ENCODE measurements at regions of chr6 and their contacts with region 1.

Region 1: GRCh38 chr6:30541515-30542403 is 14.5 kb downstream of the GNL1 start:
- DNase-seq: peak; percentile 74 to 85 (median 79)
- H3K4me3 ChIP-seq: peak overlapping the region; percentile 68
- H3K4me3 Mint-ChIP-seq: peak overlapping the region; percentile 83 to 90 (median 86)
- H3K27ac ChIP-seq: peak overlapping the region; percentile 55
- H3K27ac Mint-ChIP-seq: peak overlapping the region; percentile 84 to 97 (median 94)
- H3K4me1 ChIP-seq: peaks cover 33% of the 10 kb centered on the region
- H3K4me1 Mint-ChIP-seq: peaks cover 34 to 39% (median 37%) of the 10 kb centered on the region in 3 donors
- H3K27me3 ChIP-seq: no peaks in the 10 kb centered on the region
- H3K27me3 Mint-ChIP-seq: peaks cover 0 to under 1% of the 10 kb centered on the region in 2 donors

Region 2: DNA sequence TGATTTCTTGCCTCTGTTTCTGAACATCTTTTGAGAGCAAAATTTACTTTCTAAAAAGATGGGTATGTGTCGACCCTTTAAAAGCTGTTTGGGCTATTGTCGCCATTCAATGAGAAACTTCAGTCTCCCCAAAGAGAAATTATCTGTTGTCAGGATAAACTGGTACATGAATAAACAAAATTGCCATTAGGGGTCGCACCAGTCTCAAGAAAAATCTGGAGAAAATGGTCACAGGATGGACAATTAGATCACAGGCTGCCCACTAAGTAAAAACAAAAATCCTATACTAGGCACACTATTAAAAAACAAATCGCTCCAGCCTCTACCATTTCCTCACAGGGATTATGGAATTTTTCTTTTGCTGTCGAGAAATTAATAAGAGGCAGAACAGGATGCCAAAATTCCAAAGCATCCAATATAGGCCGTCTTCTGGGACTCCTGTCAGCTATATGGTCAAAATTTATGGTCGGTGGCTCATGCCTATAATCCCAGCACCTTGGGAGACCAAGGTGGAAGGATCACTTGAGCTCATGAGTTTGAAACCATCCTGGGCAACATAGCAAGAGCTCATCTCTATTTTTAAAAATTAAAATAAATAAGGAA is 58.0 kb before region 1 on chr6:
- CTCF ChIA-PET with region 1: interaction called, 228 read pairs
- POLR2A ChIA-PET with region 1: interaction called, 20 read pairs
- DNase-seq: peak in 2 of 5 donors; percentile 35 to 41
- H3K4me3 ChIP-seq: no peak overlapping the region
- H3K4me3 Mint-ChIP-seq: no peak overlapping the region
- H3K27ac ChIP-seq: no peak overlapping the region
- H3K27ac Mint-ChIP-seq: peak overlapping the region in 1 of 8 donors; percentile 53
- H3K4me1 ChIP-seq: peaks cover 29% of the 10 kb centered on the region
- H3K4me1 Mint-ChIP-seq: peaks cover 31 to 41% (median 34%) of the 10 kb centered on the region in 3 donors
- H3K27me3 ChIP-seq: peaks cover 21% of the 10 kb centered on the region
- H3K27me3 Mint-ChIP-seq: peaks cover 27 to 34% of the 10 kb centered on the region in 2 donors

Region 3: DNA sequence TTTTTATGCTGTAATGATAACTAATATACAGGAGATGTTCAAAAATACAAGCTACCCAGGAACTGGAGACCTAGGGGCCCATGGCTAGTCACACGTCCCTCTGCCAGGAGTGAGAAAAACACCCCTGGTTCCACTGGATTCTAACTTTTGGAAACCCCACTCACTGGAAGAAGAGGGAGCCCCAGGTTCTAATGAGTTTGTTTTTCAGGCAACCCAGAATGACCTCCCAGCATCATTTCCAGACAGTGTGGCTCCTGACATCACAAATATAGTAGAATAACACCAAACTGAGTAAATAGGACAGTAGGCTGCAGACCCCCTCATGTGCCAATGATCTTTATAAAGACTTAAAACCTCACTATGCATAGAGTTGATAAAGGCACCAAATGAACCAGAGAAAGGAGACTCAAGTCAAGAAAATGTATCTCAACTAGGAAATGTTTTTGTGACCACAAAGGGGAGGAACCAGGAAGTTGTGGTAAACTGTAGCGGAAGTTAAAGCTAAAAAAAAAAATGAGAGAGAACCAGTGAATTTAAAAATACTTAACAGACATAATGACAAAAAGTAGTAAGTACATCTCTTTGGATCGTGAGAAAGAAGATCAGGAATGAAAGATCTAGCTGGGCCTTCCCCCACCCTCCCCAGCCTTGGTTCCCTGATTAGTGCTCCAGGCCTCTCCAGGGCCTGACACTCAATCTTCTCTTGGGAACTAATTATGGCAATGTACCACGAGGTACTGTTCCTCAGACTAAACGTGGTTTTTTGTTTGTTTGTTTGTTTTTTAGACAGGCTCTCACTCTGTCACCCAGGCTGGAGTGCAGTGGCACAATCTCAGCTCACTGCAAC is 32.6 kb before region 1 on chr6:
- CTCF ChIA-PET with region 1: interaction called, 21 read pairs
- POLR2A ChIA-PET with region 1: interaction called, 4 read pairs
- DNase-seq: peak in 2 of 5 donors; percentile 79 to 84
- H3K4me3 ChIP-seq: peak overlapping the region; percentile 27
- H3K4me3 Mint-ChIP-seq: peak overlapping the region; percentile 59 to 82 (median 72)
- H3K27ac ChIP-seq: no peak overlapping the region
- H3K27ac Mint-ChIP-seq: peak overlapping the region; percentile 71 to 97 (median 86)
- H3K4me1 ChIP-seq: peaks cover 59% of the 10 kb centered on the region
- H3K4me1 Mint-ChIP-seq: peaks cover 53 to 68% (median 68%) of the 10 kb centered on the region in 3 donors
- H3K27me3 ChIP-seq: no peaks in the 10 kb centered on the region
- H3K27me3 Mint-ChIP-seq: no peaks in the 10 kb centered on the region

Region 4: GRCh38 chr6:30571075-30571768 is 29.5 kb after region 1 on chr6 and contains the start of gene ABCF1:
- CTCF ChIA-PET with region 1: interaction called, 12 read pairs
- POLR2A ChIA-PET with region 1: interaction called, 10 read pairs
- DNase-seq: peak; percentile 99 to 100 (median 99)
- H3K4me3 ChIP-seq: peak within 1 kb of the TSS; percentile 92
- H3K4me3 Mint-ChIP-seq: peak within 1 kb of the TSS; percentile 92 to 100 (median 98)
- H3K27ac ChIP-seq: peak within 1 kb of the TSS; percentile 94
- H3K27ac Mint-ChIP-seq: peak within 1 kb of the TSS; percentile 96 to 100 (median 100)
- H3K4me1 ChIP-seq: peaks cover 53% of the 10 kb centered on the region
- H3K4me1 Mint-ChIP-seq: peaks cover 63 to 73% (median 69%) of the 10 kb centered on the region in 3 donors
- H3K27me3 ChIP-seq: no peaks in the 10 kb centered on the region
- H3K27me3 Mint-ChIP-seq: no peaks in the 10 kb centered on the region
- total RNA-seq, gene ABCF1: 127 to 133 TPM

Region 5: GRCh38 chr6:30616811-30617564 is 75.2 kb after region 1 on chr6 and contains the start of gene PPP1R10:
- CTCF ChIA-PET with region 1: interaction called, 12 read pairs
- POLR2A ChIA-PET with region 1: interaction called, 9 read pairs
- DNase-seq: peak; percentile 95 to 100 (median 99)
- H3K4me3 ChIP-seq: peak within 1 kb of the TSS; percentile 95
- H3K4me3 Mint-ChIP-seq: peak within 1 kb of the TSS; percentile 93 to 100 (median 99)
- H3K27ac ChIP-seq: peak within 1 kb of the TSS; percentile 99
- H3K27ac Mint-ChIP-seq: peak within 1 kb of the TSS; percentile 100
- H3K4me1 ChIP-seq: peaks cover 43% of the 10 kb centered on the region
- H3K4me1 Mint-ChIP-seq: peaks cover 30 to 47% (median 45%) of the 10 kb centered on the region in 3 donors
- H3K27me3 ChIP-seq: no peaks in the 10 kb centered on the region
- H3K27me3 Mint-ChIP-seq: peaks cover 0 to 20% of the 10 kb centered on the region in 2 donors
- total RNA-seq, gene PPP1R10: 115 to 117 TPM

Measured in CD8-positive, alpha-beta memory T cell (primary cell).